Naive thymus-derived CD4-positive, alpha-beta T cell (primary cell): ENCODE measurements at regions of chr15 and their contacts with region 1.

Region 1: GRCh38 chr15:82809404-82810060 is at the start of gene WHAMM:
- DNase-seq: peak; percentile 85 to 97 (median 94)
- ATAC-seq: peak; percentile 96
- H3K4me3 ChIP-seq: peak within 1 kb of the TSS; percentile 73
- H3K4me3 Mint-ChIP-seq: peak within 1 kb of the TSS; percentile 89 to 99 (median 95)
- H3K27ac ChIP-seq: peak within 1 kb of the TSS; percentile 100
- H3K27ac Mint-ChIP-seq: peak within 1 kb of the TSS; percentile 92 to 100 (median 97)
- H3K4me1 ChIP-seq: peaks cover 8 to 22% of the 10 kb centered on the region in 2 donors
- H3K4me1 Mint-ChIP-seq: peaks cover 21 to 44% (median 33%) of the 10 kb centered on the region in 7 donors
- H3K27me3 ChIP-seq: no peaks in the 10 kb centered on the region
- H3K27me3 Mint-ChIP-seq: peaks cover 0 to 21% (median 0%) of the 10 kb centered on the region in 5 donors
- total RNA-seq, gene WHAMM: 14.1 to 72.2 (median 37.1) TPM

Region 2: GRCh38 chr15:82540055-82540983 is 269.2 kb before region 1 on chr15 and contains the start of gene RPS17:
- CTCF ChIA-PET with region 1: no interaction called
- POLR2A ChIA-PET with region 1: interaction called, 29 read pairs
- intact Hi-C with region 1: loop called (anchors 1 kb)
- DNase-seq: peak; percentile 96 to 100 (median 99)
- ATAC-seq: peak; percentile 98
- H3K4me3 ChIP-seq: peak within 1 kb of the TSS; percentile 84
- H3K4me3 Mint-ChIP-seq: peak within 1 kb of the TSS; percentile 90 to 98 (median 96)
- H3K27ac ChIP-seq: peak within 1 kb of the TSS; percentile 90
- H3K27ac Mint-ChIP-seq: peak within 1 kb of the TSS; percentile 89 to 97 (median 95)
- H3K4me1 ChIP-seq: peaks cover 10 to 18% of the 10 kb centered on the region in 2 donors
- H3K4me1 Mint-ChIP-seq: peaks cover 13 to 43% (median 28%) of the 10 kb centered on the region in 7 donors
- H3K27me3 ChIP-seq: no peaks in the 10 kb centered on the region
- H3K27me3 Mint-ChIP-seq: peaks cover 0 to 4% (median 0%) of the 10 kb centered on the region in 5 donors
- total RNA-seq, gene RPS17: 1,951 to 3,227 (median 2,164) TPM

Region 3: DNA sequence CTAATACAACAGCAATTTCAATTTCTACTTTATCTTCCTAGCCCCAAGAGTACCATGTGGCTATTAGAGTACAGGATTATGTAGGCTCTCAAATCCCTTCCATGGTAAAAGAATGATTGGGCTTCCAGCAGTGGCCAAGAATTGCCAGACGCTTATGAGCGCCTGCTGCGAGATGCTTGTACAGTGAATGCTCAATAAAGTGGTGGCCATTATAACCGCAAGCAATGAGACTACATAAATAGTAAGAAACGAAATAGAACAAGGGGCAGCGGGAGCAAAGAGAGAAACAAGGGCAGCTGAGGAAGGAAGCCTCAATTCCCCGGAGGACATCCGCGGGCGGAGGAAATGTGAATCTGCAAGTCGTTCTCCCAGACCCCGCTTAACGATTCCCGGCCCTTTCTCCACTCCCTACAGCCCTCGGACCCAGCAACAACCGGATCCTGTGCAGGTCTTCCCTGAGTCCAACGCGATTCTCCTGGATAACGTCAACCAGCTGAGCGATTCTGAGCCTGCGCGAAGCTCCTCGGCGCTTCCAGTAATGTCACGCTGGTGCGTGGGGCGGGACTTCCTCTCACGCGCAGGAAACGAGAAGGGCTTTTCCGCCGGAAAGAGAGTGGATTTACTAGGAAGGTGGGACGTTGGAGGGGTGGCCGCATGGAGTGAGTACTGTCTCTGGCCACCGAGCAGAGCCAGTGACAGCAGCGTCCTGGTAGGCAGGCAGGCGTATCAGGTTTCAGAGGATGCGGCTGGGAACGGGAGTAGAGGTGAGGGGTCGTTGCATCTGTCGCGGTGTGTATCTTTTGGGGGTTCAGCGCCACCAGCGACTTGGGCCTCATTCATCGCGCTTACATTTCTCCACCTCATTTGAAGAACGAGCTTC is 59.3 kb before region 1 on chr15:
- CTCF ChIA-PET with region 1: no interaction called
- POLR2A ChIA-PET with region 1: interaction called, 34 read pairs
- intact Hi-C with region 1: loop called (anchors 1 kb)
- DNase-seq: peak; percentile 51 to 84 (median 70)
- ATAC-seq: peak; percentile 96
- H3K4me3 ChIP-seq: peak overlapping the region; percentile 88
- H3K4me3 Mint-ChIP-seq: peak overlapping the region; percentile 93 to 100 (median 98)
- H3K27ac ChIP-seq: peak overlapping the region; percentile 78
- H3K27ac Mint-ChIP-seq: peak overlapping the region; percentile 89 to 98 (median 95)
- H3K4me1 ChIP-seq: peaks cover 10 to 15% of the 10 kb centered on the region in 2 donors
- H3K4me1 Mint-ChIP-seq: peaks cover 26 to 69% (median 57%) of the 10 kb centered on the region in 7 donors
- H3K27me3 ChIP-seq: no peaks in the 10 kb centered on the region
- H3K27me3 Mint-ChIP-seq: no peaks in the 10 kb centered on the region

Region 4: GRCh38 chr15:82985688-82986441 is 176.3 kb after region 1 on chr15 and contains the start of gene RAMAC:
- CTCF ChIA-PET with region 1: no interaction called
- POLR2A ChIA-PET with region 1: interaction called, 10 read pairs
- intact Hi-C with region 1: loop called (anchors 1 kb)
- DNase-seq: peak; percentile 70 to 97 (median 91)
- ATAC-seq: peak; percentile 93
- H3K4me3 ChIP-seq: peak within 1 kb of the TSS; percentile 90
- H3K4me3 Mint-ChIP-seq: peak within 1 kb of the TSS; percentile 84 to 100 (median 99)
- H3K27ac ChIP-seq: peak within 1 kb of the TSS; percentile 82
- H3K27ac Mint-ChIP-seq: peak within 1 kb of the TSS; percentile 73 to 99 (median 95)
- H3K4me1 ChIP-seq: peaks cover 14 to 18% of the 10 kb centered on the region in 2 donors
- H3K4me1 Mint-ChIP-seq: peaks cover 21 to 43% (median 35%) of the 10 kb centered on the region in 7 donors
- H3K27me3 ChIP-seq: no peaks in the 10 kb centered on the region
- H3K27me3 Mint-ChIP-seq: no peaks in the 10 kb centered on the region
- total RNA-seq, gene RAMAC: 14.2 to 27.7 (median 18.7) TPM

Region 5: GRCh38 chr15:83066734-83067637 is 257.5 kb after region 1 on chr15 and contains the start of gene BTBD1:
- CTCF ChIA-PET with region 1: no interaction called
- POLR2A ChIA-PET with region 1: no interaction called
- intact Hi-C with region 1: loop called (anchors 2 kb)
- DNase-seq: peak; percentile 67 to 93 (median 76)
- ATAC-seq: peak; percentile 88
- H3K4me3 ChIP-seq: peak within 1 kb of the TSS; percentile 87
- H3K4me3 Mint-ChIP-seq: peak within 1 kb of the TSS in 7 of 10 donors; percentile 67 to 89 (median 83)
- H3K27ac ChIP-seq: peak within 1 kb of the TSS; percentile 84
- H3K27ac Mint-ChIP-seq: peak within 1 kb of the TSS; percentile 60 to 91 (median 87)
- H3K4me1 ChIP-seq: peaks cover 32 to 35% of the 10 kb centered on the region in 2 donors
- H3K4me1 Mint-ChIP-seq: peaks cover 8 to 18% (median 11%) of the 10 kb centered on the region in 7 donors
- H3K27me3 ChIP-seq: no peaks in the 10 kb centered on the region
- H3K27me3 Mint-ChIP-seq: peaks cover 0 to 1% (median 0%) of the 10 kb centered on the region in 5 donors
- total RNA-seq, gene BTBD1: 35.0 to 57.6 (median 36.4) TPM